Endothelial cell of umbilical vein (primary cell): ENCODE measurements at regions of chr19 and their contacts with region 1.

Region 1: DNA sequence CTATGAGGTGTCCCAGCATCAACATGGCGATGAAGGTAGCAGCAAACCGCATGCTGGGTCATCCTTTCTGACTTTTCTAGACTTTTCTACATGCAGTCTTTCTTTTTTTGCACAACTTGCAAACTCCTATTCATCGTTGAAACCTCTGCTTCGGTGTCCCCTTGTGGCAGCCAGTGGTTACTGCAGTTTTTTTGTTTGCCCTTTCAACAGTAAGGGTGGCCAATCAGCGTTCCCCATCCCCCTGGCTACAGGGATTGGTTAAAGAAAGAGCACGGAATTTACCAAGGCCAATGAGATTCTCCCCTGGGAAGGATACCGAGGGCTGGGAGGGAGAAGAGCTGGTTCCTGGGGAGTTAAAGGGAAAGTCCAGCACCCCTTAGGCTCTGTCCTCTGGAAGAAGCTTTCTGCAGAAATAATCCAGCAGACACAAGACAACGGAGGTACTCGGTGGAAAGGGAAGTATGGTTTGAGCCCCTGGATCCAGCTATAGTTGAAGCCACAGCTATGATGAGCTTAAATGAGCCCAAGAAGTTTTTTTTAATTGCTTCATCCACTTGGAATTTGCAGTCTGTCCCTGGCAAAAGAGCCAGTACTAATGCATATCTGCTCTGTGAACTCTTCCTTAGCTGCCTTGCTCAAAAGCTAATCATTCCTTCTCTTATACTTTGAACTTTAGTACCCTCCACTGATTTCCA is 5.6 kb upstream of the LSM4 start:
- DNase-seq: peak; percentile 97
- H3K4me3 ChIP-seq: peak overlapping the region in 2 of 3 experiments; percentile 4 to 16
- H3K27ac ChIP-seq: peak overlapping the region; percentile 13
- H3K4me1 ChIP-seq: peaks cover 8% of the 10 kb centered on the region
- H3K27me3 ChIP-seq: peaks cover 0 to 2% of the 10 kb centered on the region in 2 experiments
- CTCF ChIP-seq: peak; percentile 84 to 97
- POLR2A ChIP-seq: no peak

Region 2: GRCh38 chr19:18274781-18275356 is 53.6 kb before region 1 on chr19:
- CTCF ChIA-PET with region 1: interaction called, 401 read pairs
- POLR2A ChIA-PET with region 1: interaction called, 113 read pairs
- dilution Hi-C with region 1: no loop called
- intact Hi-C with region 1: loop called (anchors 1 kb)
- DNase-seq: peak; percentile 81
- H3K4me3 ChIP-seq: no peak overlapping the region
- H3K27ac ChIP-seq: no peak overlapping the region
- H3K4me1 ChIP-seq: peaks cover 23% of the 10 kb centered on the region
- H3K27me3 ChIP-seq: no peaks in the 10 kb centered on the region
- CTCF ChIP-seq: no peak
- POLR2A ChIP-seq: peak; percentile 54

Region 3: DNA sequence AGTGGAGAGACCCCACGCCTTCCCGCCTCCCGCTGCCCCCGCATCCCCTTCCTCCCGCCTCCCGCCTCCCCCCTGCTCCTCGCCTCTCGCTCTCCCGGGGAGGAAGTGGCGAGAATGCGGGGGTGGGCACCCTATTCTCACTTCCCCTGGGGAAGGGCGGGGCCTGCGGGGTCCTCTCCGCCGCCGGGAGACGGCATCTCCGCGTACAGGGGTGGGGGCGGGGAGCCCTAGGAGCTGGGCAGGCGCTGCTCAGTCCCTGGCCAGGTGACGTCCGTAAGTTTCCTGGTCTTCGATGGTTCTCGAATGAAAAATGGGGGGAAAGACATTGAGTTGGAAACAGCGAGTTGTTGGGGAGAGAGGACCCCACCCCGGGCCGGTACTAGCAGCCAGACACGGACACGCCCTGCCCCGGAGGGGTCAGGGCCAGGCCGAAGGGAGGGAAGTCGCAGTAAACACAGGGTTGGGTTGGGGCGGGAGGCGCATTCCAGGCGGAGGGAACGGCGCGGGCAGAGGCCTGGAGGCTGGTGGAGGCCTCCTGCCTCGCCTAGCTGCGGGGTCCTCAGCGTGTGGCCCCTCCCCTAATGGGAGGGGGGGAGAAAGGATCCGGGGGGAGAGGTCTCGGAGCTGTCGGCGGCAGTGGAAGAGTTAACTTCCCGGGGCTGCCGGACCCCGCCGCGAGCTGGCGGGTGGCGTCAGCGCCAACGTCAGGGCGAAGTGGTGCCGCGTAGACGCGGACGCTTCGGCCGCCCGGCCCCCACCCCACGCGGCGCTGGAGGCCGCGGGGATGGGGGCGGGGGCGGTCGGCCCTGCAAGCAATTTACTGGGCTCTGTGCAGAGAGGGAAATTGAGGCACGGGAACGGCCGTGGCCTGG is 36.7 kb before region 1 on chr19:
- CTCF ChIA-PET with region 1: interaction called, 21 read pairs
- POLR2A ChIA-PET with region 1: interaction called, 17 read pairs
- dilution Hi-C with region 1: no loop called
- intact Hi-C with region 1: loop called (anchors 1 kb)
- DNase-seq: peak; percentile 72
- H3K4me3 ChIP-seq: peak overlapping the region; percentile 52 to 78 (median 56)
- H3K27ac ChIP-seq: peak overlapping the region; percentile 77
- H3K4me1 ChIP-seq: peaks cover 16% of the 10 kb centered on the region
- H3K27me3 ChIP-seq: no peaks in the 10 kb centered on the region
- CTCF ChIP-seq: no peak
- POLR2A ChIP-seq: peak; percentile 35

Region 4: DNA sequence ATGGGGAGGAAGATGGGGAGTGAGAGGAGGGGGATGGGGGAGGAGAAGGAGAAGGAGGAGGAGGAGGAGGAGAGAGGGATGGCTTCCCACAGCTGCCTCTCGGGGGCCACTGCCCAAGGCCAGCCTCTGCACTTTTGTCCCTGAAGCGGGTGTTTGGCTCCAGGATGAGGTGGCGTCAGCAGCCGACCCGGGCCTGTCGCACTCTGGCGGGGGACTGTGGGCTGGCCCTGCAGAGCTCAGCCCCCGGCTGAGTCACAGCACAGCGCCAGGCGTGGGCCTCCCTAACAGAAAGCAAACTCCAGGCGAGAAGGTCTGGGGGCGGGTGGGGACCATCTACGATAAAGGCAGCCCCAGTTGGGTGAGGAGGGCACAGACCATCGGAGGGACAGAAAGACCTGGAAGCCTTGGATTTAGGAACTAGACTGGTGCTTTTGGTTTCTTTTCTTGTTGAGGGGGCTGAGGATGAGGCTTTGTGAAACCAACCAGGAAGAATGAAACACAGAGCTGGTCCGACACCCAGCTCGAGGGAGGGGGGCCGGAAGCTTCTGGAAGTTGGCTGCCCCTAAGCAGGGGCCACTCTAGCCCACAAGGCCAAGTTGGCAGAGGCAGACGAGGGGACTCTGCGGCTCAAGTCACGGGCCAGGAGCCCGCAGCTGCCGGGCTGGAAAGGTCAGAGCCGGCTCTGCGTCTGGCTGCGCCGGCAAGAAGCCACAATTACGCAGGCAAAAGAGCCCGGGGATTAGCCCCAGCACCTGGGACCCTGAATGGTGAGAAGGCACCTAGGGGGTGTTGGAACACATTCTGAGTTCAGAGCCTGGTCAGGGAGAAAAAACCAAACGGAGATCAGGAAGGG is 23.8 kb before region 1 on chr19:
- CTCF ChIA-PET with region 1: interaction called, 17 read pairs
- POLR2A ChIA-PET with region 1: no interaction called
- dilution Hi-C with region 1: no loop called
- intact Hi-C with region 1: no loop called
- DNase-seq: peak; percentile 83
- H3K4me3 ChIP-seq: peak overlapping the region in 2 of 3 experiments; percentile 8 to 35
- H3K27ac ChIP-seq: peak overlapping the region; percentile 98
- H3K4me1 ChIP-seq: peaks cover 21% of the 10 kb centered on the region
- H3K27me3 ChIP-seq: no peaks in the 10 kb centered on the region
- CTCF ChIP-seq: no peak
- POLR2A ChIP-seq: peak; percentile 69

Region 5: DNA sequence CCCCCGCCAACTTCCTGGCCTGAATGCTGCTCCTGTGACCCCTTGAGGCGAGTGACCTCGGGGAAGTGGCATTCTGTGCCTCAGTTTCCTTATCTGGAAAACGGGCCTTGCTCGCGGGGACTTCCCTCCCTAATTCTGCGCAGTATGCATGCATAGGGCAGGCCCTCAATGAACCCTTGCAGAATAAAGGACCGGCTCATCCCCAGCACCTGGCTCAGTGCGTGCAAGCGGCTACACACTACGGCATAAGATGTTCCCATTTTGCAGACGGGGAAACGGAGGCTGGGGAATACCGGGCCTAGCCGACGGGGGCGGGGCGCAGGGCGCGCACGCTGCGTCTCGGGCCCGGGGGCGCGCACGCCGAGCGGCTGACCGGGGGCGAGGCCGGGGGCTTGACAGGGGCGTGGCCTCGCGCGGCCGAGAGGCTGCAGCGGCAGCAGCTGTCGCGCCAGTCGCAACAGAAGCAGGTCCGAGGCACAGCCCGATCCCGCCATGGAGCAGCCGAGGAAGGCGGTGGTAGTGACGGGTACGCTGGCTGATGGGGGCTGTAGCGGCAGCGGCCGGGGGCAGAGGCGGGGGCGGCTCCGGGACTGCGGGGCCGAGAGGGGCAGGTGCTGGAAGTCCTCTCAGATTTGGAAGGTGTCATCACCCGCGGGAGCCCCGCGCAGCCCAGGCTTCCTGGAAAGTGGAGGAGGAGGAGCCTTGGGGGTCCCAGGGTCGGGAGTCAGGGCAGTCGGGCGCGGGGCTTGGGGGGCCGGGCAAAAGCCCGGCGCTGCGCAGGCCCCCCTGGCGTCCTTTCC is 11.9 kb after region 1 on chr19 and contains the start of gene PGPEP1:
- CTCF ChIA-PET with region 1: interaction called, 62 read pairs
- POLR2A ChIA-PET with region 1: interaction called, 3 read pairs
- dilution Hi-C with region 1: no loop called
- intact Hi-C with region 1: no loop called
- DNase-seq: peak; percentile 65
- H3K4me3 ChIP-seq: peak within 1 kb of the TSS; percentile 17 to 91 (median 52)
- H3K27ac ChIP-seq: no peak within 1 kb of the TSS
- H3K4me1 ChIP-seq: peaks cover 11% of the 10 kb centered on the region
- H3K27me3 ChIP-seq: peaks cover 0 to 2% of the 10 kb centered on the region in 2 experiments
- CTCF ChIP-seq: no peak
- POLR2A ChIP-seq: peak; percentile 64
- total RNA-seq, gene PGPEP1: 27.2 and 30.5 TPM in 2 replicates

Region 6: DNA sequence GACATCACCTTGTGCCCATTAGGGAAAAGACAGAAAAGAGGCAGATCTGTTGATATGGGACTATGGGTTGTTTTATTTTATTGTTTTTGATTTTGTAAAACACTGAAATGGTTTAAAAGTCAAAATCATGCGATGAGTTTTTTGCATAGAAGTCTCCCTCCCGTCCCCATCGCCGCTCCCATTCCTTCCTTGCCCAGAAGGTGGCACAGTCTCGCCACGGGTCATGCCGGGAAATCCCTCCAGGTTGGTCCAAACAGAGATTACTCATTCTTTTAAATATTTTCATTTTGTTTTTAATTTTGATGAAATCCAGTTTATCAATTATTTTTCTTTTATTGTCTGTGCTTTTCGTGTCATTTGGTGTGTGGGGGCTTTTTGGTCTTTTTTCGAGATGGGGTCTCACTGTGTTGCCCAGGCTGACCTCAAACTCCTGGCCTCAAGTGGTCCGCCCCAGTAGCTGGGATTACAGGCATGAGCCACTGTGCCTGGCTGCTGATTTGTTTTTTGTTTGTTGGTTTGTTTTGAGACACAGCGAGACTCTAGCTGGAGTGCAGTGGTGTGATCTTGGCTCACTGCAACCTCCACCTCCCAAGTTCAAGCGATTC is 21.1 kb after region 1 on chr19:
- CTCF ChIA-PET with region 1: interaction called, 10 read pairs
- POLR2A ChIA-PET with region 1: no interaction called
- dilution Hi-C with region 1: no loop called
- intact Hi-C with region 1: no loop called
- DNase-seq: peak; percentile 67
- H3K4me3 ChIP-seq: no peak overlapping the region
- H3K27ac ChIP-seq: no peak overlapping the region
- H3K4me1 ChIP-seq: no peaks in the 10 kb centered on the region
- H3K27me3 ChIP-seq: no peaks in the 10 kb centered on the region
- CTCF ChIP-seq: peak; percentile 80 to 86
- POLR2A ChIP-seq: no peak

Region 7: DNA sequence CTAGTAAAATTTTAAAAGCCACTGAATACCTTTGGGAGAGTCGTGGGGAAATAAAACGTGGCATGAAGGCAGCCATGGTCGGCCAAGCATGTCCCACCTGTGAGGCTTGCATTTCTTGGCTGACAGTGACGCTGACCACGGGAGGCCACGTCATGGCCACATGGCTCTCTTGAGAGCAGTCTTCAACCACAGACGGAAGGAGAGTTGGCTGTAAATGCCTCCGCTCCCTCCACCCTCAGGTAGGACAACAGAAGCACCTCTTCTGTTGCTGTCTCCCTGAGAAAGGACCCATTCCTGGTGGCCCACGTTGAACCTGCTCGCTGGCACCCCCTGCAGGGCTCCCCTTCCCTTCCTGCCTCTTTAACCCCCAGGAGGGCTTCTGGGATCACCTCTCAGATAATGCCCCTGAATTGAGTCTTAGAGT is 79.6 kb after region 1 on chr19:
- CTCF ChIA-PET with region 1: interaction called, 23 read pairs
- POLR2A ChIA-PET with region 1: no interaction called
- dilution Hi-C with region 1: no loop called
- intact Hi-C with region 1: no loop called
- DNase-seq: no peak
- H3K4me3 ChIP-seq: no peak overlapping the region
- H3K27ac ChIP-seq: no peak overlapping the region
- H3K4me1 ChIP-seq: no peaks in the 10 kb centered on the region
- H3K27me3 ChIP-seq: no peaks in the 10 kb centered on the region
- CTCF ChIP-seq: peak; percentile 55 to 69
- POLR2A ChIP-seq: no peak

Region 8: GRCh38 chr19:18571564-18572300 is 243.2 kb after region 1 on chr19 and contains the start of gene UBA52:
- CTCF ChIA-PET with region 1: no interaction called
- POLR2A ChIA-PET with region 1: no interaction called
- dilution Hi-C with region 1: no loop called
- intact Hi-C with region 1: no loop called
- DNase-seq: peak; percentile 98
- H3K4me3 ChIP-seq: peak within 1 kb of the TSS; percentile 66 to 91 (median 68)
- H3K27ac ChIP-seq: peak within 1 kb of the TSS; percentile 60
- H3K4me1 ChIP-seq: peaks cover 16% of the 10 kb centered on the region
- H3K27me3 ChIP-seq: no peaks in the 10 kb centered on the region
- CTCF ChIP-seq: no peak
- POLR2A ChIP-seq: peak; percentile 92
- total RNA-seq, gene UBA52: 1,218 and 1,221 TPM in 2 replicates